ENCODE measurements at regions of chr19 and their contacts with region 1.

Region 1: DNA sequence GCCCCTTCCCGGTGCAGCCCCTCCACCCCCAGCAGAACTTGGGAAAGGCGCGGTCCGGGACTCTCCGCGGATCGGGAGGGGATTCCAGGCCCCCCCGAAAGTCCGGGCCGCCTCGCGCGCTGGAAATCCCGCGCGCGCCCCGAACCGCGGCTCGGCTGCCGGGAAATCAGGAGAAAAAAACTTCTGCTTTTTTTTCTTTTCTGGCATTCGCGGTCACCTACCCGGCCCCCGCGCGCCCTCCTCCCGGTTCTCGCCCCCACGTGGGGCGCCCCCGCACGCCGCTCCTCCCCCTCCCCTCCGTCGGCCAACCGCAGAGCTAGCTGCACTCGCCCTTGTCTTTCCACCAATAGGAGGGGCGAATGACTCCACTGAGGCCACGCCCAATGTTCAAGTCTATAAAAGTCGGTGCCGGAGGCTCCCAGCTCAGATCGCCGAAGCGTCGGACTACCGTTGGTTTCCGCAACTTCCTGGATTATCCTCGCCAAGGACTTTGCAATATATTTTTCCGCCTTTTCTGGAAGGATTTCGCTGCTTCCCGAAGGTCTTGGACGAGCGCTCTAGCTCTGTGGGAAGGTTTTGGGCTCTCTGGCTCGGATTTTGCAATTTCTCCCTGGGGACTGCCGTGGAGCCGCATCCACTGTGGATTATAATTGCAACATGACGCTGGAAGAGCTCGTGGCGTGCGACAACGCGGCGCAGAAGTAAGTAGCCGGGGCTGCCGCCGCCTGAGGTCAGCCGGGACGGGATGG is at the start of gene GADD45B:
- DNase-seq: peak; percentile 93
- ATAC-seq: peak; percentile 56
- H3K4me3 ChIP-seq: peak within 1 kb of the TSS; percentile 92 to 100 (median 98)
- H3K27ac ChIP-seq: peak within 1 kb of the TSS; percentile 56
- H3K4me1 ChIP-seq: peaks cover 33% of the 10 kb centered on the region
- H3K27me3 ChIP-seq: no peaks in the 10 kb centered on the region; a peak in 2 of 5 replicates
- CTCF ChIP-seq: no peak
- EP300 ChIP-seq: no peak; a peak in 2 of 4 replicates
- POLR2A ChIP-seq: peak; percentile 100
- RAD21 ChIP-seq: peak; percentile 36; the same call in 1 of the 2 replicates
- total RNA-seq, gene GADD45B: 3.2 and 4.6 TPM in 2 replicates

Region 2: GRCh38 chr19:2446271-2446779 is 29.6 kb before region 1 on chr19:
- CTCF ChIA-PET with region 1: no interaction called
- POLR2A ChIA-PET with region 1: no interaction called
- in situ Hi-C with region 1: no loop called
- intact Hi-C with region 1: no loop called
- DNase-seq: no peak
- ATAC-seq: no peak
- H3K4me3 ChIP-seq: no peak overlapping the region
- H3K27ac ChIP-seq: no peak overlapping the region
- H3K4me1 ChIP-seq: no peaks in the 10 kb centered on the region
- H3K27me3 ChIP-seq: no peaks in the 10 kb centered on the region
- CTCF ChIP-seq: no peak
- EP300 ChIP-seq: no peak
- POLR2A ChIP-seq: no peak
- RAD21 ChIP-seq: no peak

Region 3: DNA sequence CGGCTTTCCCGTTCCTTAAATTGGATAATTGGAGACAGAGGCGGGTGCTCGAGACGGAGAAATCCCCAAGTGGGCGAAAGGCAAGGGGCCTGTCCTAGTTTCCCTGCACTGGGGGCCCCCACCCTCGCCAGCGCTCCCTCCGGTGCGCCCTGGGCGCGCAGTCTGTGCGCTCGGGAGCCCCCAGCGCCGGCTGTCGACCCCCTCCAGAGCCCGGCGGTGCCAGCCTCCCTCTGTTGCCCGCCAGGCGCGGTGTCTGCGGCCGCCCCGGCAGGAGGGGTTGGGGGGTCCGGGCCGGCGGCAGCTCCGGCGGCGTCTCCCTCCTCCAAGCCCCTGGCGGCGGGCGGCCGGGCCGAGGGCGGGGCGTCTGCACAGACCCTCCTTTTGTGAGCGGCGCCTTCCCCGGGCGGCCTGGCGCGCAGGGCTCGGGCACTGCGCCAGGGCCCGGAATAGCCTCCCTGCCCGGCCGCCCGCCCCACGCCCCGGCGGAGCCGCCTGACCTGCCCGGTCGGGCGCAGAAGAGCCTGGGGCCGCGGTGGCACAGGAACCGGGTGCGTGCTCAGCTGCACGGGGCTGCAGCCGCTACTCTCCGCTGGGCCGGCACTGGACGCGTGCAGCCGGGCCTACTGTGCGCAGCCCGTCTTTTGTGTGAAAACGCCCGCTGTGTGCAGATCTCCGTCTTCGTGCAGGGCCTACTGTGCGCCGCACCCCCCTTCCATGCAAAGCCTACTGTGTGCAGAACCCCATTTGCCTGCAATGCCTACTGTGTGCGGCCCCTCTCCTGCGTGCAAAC is 13.3 kb after region 1 on chr19:
- CTCF ChIA-PET with region 1: no interaction called
- POLR2A ChIA-PET with region 1: interaction called, 65 read pairs
- in situ Hi-C with region 1: no loop called
- intact Hi-C with region 1: no loop called
- DNase-seq: no peak
- ATAC-seq: peak; percentile 48
- H3K4me3 ChIP-seq: peak overlapping the region in 1 of 3 experiments; percentile 62; a peak in 1 of 6 replicates
- H3K27ac ChIP-seq: no peak overlapping the region
- H3K4me1 ChIP-seq: peaks cover 46% of the 10 kb centered on the region
- H3K27me3 ChIP-seq: peaks cover 10 to 46% of the 10 kb centered on the region in 2 experiments
- CTCF ChIP-seq: no peak
- EP300 ChIP-seq: no peak
- POLR2A ChIP-seq: no peak
- RAD21 ChIP-seq: no peak

Region 4: DNA sequence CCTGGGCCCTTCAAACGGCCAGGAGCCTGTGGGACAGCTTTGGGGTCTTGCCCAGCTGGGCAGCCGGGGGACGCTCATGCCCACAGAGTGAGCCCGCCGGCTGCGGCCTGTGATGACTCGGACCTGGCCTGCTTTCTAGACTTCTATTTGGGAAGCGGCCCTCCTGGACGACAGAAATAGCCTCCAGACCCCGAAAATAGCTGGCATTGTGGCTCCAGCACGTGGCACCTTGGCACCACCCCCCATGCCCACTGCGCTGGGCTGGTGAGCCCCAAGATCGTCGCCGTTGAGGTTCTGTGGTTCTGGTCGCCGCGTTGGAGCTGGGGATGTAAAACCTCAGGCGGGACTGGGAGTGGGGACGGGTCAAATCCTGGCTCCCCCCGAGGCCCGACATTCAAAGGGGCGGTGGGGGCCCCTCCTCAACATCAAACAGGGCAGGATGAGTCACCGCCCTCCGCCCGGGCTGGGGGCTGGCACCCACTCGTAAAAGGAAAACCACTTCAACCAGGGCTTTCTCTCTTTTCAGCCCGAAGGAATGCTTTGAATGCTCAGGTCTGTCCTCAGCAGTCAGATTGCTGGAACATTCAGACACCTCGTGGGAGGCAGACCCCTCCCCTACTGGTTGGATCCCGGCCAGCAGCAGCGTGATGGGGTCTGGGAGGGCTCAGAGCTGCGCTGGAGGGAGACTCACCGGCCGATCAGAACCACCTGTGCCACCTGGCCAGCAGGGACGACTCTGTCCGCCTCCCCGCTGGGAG is 42.2 kb after region 1 on chr19:
- CTCF ChIA-PET with region 1: no interaction called
- POLR2A ChIA-PET with region 1: interaction called, 19 read pairs
- in situ Hi-C with region 1: no loop called
- intact Hi-C with region 1: no loop called
- DNase-seq: no peak
- ATAC-seq: no peak
- H3K4me3 ChIP-seq: peak overlapping the region in 1 of 3 experiments; percentile 16; a peak in 1 of 6 replicates
- H3K27ac ChIP-seq: no peak overlapping the region
- H3K4me1 ChIP-seq: peaks cover 48% of the 10 kb centered on the region
- H3K27me3 ChIP-seq: no peaks in the 10 kb centered on the region
- CTCF ChIP-seq: no peak
- EP300 ChIP-seq: no peak
- POLR2A ChIP-seq: no peak
- RAD21 ChIP-seq: no peak

Region 5: DNA sequence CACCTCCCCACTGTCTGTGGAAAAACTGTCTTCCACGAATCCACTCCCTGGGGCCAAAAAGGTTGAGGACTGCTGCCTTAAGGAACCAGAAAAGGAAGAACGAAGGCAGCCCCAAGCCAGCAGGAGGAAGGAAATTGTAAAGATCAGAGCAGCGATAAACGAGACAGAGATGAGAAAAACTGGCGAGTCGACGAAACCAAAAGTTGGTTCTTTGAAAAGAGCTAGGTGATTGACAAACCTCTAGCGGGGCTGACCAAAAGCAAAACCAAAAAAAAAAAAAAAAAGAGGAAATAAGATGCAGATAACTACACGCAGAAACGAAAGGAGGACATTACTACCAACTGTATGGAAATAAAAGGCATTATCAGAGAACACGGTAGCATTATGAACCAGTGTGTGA is 77.0 kb after region 1 on chr19:
- CTCF ChIA-PET with region 1: no interaction called
- POLR2A ChIA-PET with region 1: interaction called, 199 read pairs
- in situ Hi-C with region 1: no loop called
- intact Hi-C with region 1: no loop called
- DNase-seq: no peak
- ATAC-seq: no peak
- H3K4me3 ChIP-seq: no peak overlapping the region
- H3K27ac ChIP-seq: no peak overlapping the region
- H3K4me1 ChIP-seq: peaks cover 57% of the 10 kb centered on the region
- H3K27me3 ChIP-seq: no peaks in the 10 kb centered on the region
- CTCF ChIP-seq: no peak
- EP300 ChIP-seq: no peak
- POLR2A ChIP-seq: no peak
- RAD21 ChIP-seq: no peak

Region 6: DNA sequence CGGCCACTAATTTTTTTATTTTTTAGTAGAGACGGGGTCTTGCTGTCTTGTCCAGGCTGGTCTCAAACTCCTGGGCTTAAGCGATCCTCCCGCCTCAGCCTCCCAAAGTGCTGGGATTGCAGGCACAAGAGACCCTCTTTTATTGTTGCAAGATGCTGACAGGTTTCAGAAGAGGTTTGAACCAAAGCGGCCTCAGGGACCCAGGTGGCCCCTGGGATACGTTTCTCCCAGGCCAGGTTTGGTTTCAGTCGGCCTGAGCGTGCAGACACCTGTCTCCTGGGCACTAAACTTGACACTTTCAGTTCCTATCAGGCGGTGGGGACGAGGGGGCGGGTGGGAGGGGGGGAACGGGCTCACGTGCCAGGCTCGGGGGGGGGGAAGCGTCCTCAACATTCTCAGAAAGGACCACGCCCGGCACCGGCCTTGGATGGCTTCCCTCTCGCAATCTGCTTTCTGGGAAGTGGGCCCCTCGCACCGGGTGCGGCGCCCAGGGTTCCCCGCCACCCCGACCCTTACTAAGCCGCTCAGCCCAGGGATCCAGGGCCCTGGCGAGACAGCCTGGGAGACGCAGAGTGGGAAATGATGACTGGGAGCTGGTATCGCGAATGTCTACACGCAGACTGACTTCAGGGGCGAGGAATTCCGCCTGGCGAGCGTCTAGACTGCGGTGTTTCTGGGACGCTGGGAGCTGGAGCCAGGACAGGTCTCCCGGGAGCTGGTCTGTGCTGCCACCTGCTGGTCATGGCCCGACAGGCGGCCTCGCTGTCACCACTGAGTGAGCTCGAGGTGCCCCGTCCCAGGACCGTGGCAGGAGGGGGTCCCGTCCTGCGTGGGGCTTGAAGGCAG is 135.0 kb after region 1 on chr19:
- CTCF ChIA-PET with region 1: interaction called, 39 read pairs
- POLR2A ChIA-PET with region 1: interaction called, 67 read pairs
- in situ Hi-C with region 1: loop called (anchors 5 kb)
- intact Hi-C with region 1: loop called (anchors 1 kb)
- DNase-seq: peak; percentile 70
- ATAC-seq: peak; percentile 92
- H3K4me3 ChIP-seq: peak overlapping the region; percentile 44 to 77 (median 62); a peak in 4 of 6 replicates
- H3K27ac ChIP-seq: no peak overlapping the region
- H3K4me1 ChIP-seq: peaks cover 16% of the 10 kb centered on the region; the same call in 1 of the 2 replicates
- H3K27me3 ChIP-seq: no peaks in the 10 kb centered on the region; a peak in 1 of 5 replicates
- CTCF ChIP-seq: peak; percentile 99
- EP300 ChIP-seq: no peak
- POLR2A ChIP-seq: no peak
- RAD21 ChIP-seq: peak; percentile 99

Region 7: DNA sequence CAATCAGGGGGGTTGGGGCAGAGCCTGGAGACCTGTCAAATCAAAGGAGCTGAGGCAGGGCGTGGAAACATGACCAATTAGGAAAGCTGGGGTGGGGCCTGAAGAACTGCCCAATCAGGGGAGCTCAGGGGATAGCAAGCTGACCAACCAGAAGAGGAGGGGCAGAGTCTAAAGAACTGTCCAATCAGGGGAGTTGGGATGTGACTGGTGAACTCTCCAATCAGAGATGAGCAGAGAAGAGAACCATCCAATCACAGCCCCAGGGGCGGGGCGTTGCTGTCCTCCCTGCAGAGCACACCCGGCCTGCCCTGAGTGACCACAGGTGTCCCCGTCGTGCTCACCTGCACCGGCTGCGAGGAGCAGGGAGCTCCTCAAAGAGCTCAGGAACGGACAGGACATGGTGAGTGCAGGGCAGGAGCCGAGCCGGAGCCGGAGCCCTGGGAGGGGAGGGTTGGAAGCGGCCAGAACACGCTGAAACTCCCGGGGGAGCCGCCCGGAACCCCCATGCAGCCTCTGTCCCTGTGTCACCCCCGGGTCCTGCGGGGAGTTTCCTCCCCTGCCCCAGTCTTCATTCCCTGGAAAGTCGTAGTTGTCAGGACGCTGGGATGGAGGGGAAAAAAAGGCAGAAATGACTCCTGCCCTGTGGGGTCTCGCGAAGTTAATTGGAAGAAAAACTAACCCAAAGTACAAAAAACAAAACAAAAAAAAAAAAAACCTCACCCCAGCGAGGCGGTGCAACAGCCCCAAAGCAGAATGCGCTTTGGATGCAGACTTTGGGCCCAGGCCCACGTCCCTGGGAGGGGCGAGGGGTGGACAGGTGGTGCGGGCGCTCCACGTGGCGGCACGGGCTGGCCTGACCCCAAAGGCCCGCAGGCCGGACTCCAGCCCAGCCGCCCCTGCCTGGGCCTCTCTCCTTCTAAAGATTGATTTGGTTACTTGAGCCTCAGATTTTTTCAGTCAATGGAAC is 391.4 kb after region 1 on chr19 and contains the start of gene ZNF556:
- CTCF ChIA-PET with region 1: no interaction called
- POLR2A ChIA-PET with region 1: interaction called, 12 read pairs
- in situ Hi-C with region 1: no loop called
- intact Hi-C with region 1: no loop called
- DNase-seq: peak; percentile 100
- ATAC-seq: peak; percentile 96
- H3K4me3 ChIP-seq: peak within 1 kb of the TSS; percentile 72 to 94 (median 80)
- H3K27ac ChIP-seq: peak within 1 kb of the TSS; percentile 90
- H3K4me1 ChIP-seq: peaks cover 41% of the 10 kb centered on the region
- H3K27me3 ChIP-seq: no peaks in the 10 kb centered on the region
- CTCF ChIP-seq: peak; percentile 25
- EP300 ChIP-seq: peak in 1 of 2 experiments; percentile 24; a peak in 1 of 4 replicates
- POLR2A ChIP-seq: peak; percentile 99
- RAD21 ChIP-seq: peak; percentile 56
- total RNA-seq, gene ZNF556: 28.6 and 41.2 TPM in 2 replicates